ENCODE measurements at regions of chr16 and their contacts with region 1.

Region 1: GRCh38 chr16:48609652-48610029 is 339 bp downstream of the N4BP1 start:
- DNase-seq: no peak
- ATAC-seq: peak; percentile 17
- H3K4me3 ChIP-seq: peak overlapping the region; percentile 81 to 88
- H3K4me3 Mint-ChIP-seq: peak overlapping the region; percentile 86
- H3K27ac ChIP-seq: peak overlapping the region; percentile 72 to 87
- H3K27ac Mint-ChIP-seq: peak overlapping the region; percentile 94
- H3K4me1 ChIP-seq: peaks cover 79% of the 10 kb centered on the region
- H3K4me1 Mint-ChIP-seq: peaks cover 40% of the 10 kb centered on the region
- H3K27me3 ChIP-seq: no peaks in the 10 kb centered on the region
- H3K27me3 Mint-ChIP-seq: no peaks in the 10 kb centered on the region
- CTCF ChIP-seq: no peak

Region 2: GRCh38 chr16:48244080-48244862 is 365.4 kb before region 1 on chr16 and contains the start of gene LONP2:
- CTCF ChIA-PET with region 1: no interaction called
- POLR2A ChIA-PET with region 1: interaction called, 3 read pairs
- intact Hi-C with region 1: loop called in 1 of 2 experiments (anchors 1 kb)
- DNase-seq: peak; percentile 82 to 93 (median 89)
- ATAC-seq: peak; percentile 94
- H3K4me3 ChIP-seq: peak within 1 kb of the TSS; percentile 66 to 88
- H3K4me3 Mint-ChIP-seq: peak within 1 kb of the TSS; percentile 90
- H3K27ac ChIP-seq: peak within 1 kb of the TSS; percentile 75 to 83
- H3K27ac Mint-ChIP-seq: peak within 1 kb of the TSS; percentile 95
- H3K4me1 ChIP-seq: peaks cover 38% of the 10 kb centered on the region
- H3K4me1 Mint-ChIP-seq: peaks cover 50% of the 10 kb centered on the region
- H3K27me3 ChIP-seq: no peaks in the 10 kb centered on the region
- H3K27me3 Mint-ChIP-seq: no peaks in the 10 kb centered on the region
- CTCF ChIP-seq: no peak
- total RNA-seq, gene LONP2: 71.8 to 72.1 TPM

Region 3: GRCh38 chr16:48535831-48536613 is 73.6 kb before region 1 on chr16:
- CTCF ChIA-PET with region 1: no interaction called
- POLR2A ChIA-PET with region 1: no interaction called
- intact Hi-C with region 1: no loop called
- DNase-seq: peak in 3 of 9 experiments; percentile 32 to 49 (median 48)
- ATAC-seq: peak; percentile 24
- H3K4me3 ChIP-seq: no peak overlapping the region
- H3K4me3 Mint-ChIP-seq: no peak overlapping the region
- H3K27ac ChIP-seq: no peak overlapping the region
- H3K27ac Mint-ChIP-seq: no peak overlapping the region
- H3K4me1 ChIP-seq: peaks cover 22% of the 10 kb centered on the region
- H3K4me1 Mint-ChIP-seq: peaks cover 20% of the 10 kb centered on the region
- H3K27me3 ChIP-seq: no peaks in the 10 kb centered on the region
- H3K27me3 Mint-ChIP-seq: no peaks in the 10 kb centered on the region
- CTCF ChIP-seq: no peak

Region 4: DNA sequence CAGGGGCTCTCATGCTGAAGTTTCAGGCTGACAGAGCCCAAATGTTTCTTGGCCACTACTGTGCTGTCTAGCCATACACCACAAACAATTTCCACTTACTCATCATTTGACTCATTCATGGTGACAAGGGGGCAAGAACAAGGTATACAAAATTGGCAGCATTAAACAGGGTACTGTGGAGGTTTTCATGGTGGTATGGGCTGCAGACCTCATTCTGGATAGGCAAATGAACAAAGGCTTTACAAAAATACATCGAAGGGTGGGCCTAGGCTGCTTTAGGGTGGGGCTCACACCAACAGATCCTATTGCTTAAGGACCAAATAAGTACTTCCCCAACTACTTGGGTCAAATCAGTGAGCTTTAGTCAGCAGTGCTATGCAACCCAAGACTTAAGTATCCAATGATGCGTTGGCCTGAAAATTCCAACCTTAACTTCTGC is 52.7 kb before region 1 on chr16:
- CTCF ChIA-PET with region 1: interaction called, 4 read pairs
- POLR2A ChIA-PET with region 1: no interaction called
- intact Hi-C with region 1: loop called (anchors 5 kb)
- DNase-seq: peak in 2 of 9 experiments; percentile 27 to 30
- ATAC-seq: peak; percentile 45
- H3K4me3 ChIP-seq: no peak overlapping the region
- H3K4me3 Mint-ChIP-seq: no peak overlapping the region
- H3K27ac ChIP-seq: no peak overlapping the region
- H3K27ac Mint-ChIP-seq: peak overlapping the region; percentile 38
- H3K4me1 ChIP-seq: peaks cover 47% of the 10 kb centered on the region
- H3K4me1 Mint-ChIP-seq: peaks cover 80% of the 10 kb centered on the region
- H3K27me3 ChIP-seq: no peaks in the 10 kb centered on the region
- H3K27me3 Mint-ChIP-seq: no peaks in the 10 kb centered on the region
- CTCF ChIP-seq: no peak

Region 5: DNA sequence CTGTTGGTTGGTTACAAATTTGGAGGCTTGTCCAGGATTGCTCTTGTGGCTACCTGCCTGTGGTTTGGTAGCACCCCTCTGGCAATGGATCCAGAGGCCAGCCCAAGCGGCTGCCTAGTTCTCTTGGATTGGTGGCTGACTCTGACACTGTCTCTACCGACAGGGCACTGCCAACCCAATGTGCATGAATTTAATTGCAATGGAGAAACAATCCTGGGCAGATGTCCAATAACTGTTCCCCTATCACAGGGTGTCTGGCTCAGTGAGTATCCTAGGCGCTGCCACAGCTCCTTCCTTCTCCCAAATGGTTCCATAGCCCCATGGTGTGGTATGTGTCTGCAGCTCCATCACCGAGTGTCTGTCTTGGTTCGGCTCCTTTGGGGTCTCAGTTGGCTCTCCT is 19.2 kb before region 1 on chr16:
- CTCF ChIA-PET with region 1: interaction called, 3 read pairs
- POLR2A ChIA-PET with region 1: interaction called, 5 read pairs
- intact Hi-C with region 1: loop called in 1 of 2 experiments (anchors 2 kb)
- DNase-seq: no peak
- ATAC-seq: no peak
- H3K4me3 ChIP-seq: no peak overlapping the region
- H3K4me3 Mint-ChIP-seq: no peak overlapping the region
- H3K27ac ChIP-seq: no peak overlapping the region
- H3K27ac Mint-ChIP-seq: no peak overlapping the region
- H3K4me1 ChIP-seq: peaks cover 7% of the 10 kb centered on the region
- H3K4me1 Mint-ChIP-seq: peaks cover 53% of the 10 kb centered on the region
- H3K27me3 ChIP-seq: no peaks in the 10 kb centered on the region
- H3K27me3 Mint-ChIP-seq: no peaks in the 10 kb centered on the region
- CTCF ChIP-seq: no peak

Measured in CD8-positive, alpha-beta T cell (primary cell).